ENCODE measurements at regions of chr2 and their contacts with region 1.

Region 1: DNA sequence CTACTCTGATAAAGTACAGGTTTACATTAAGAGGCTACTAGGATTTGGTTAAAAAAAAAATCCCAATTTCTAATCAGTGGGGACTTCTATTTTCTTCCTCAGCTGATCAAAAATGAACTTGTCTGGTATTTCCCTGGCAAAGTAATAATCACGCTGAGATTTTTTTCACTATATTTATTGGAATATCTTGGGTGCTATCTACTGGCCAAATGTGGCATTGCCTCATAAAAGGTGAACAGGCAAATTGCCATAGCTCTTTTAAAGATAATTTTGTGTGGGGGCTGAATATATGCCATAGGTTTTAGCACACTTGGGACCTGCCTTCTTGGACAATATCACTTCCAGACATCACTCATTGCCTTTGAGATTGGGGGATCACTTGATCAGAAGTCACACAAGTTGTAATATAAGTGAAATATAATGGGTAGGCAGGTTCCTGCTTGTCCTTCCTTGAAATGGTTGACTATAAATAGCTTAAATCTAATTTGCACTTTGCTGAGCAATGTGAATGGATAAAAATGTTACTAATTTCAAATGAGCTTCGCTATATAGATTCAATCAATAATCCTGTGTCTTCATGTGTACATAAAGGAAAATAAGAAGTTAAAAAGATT is 7.0 kb upstream of the NXPH2 start:
- DNase-seq: peak in 2 of 9 experiments; percentile 11 to 14
- ATAC-seq: no peak
- H3K4me3 ChIP-seq: no peak overlapping the region
- H3K4me3 Mint-ChIP-seq: no peak overlapping the region
- H3K27ac ChIP-seq: no peak overlapping the region
- H3K27ac Mint-ChIP-seq: no peak overlapping the region
- H3K4me1 ChIP-seq: no peaks in the 10 kb centered on the region
- H3K4me1 Mint-ChIP-seq: no peaks in the 10 kb centered on the region
- H3K27me3 ChIP-seq: no peaks in the 10 kb centered on the region
- H3K27me3 Mint-ChIP-seq: peaks cover 8% of the 10 kb centered on the region
- CTCF ChIP-seq: peak; percentile 48

Region 2: DNA sequence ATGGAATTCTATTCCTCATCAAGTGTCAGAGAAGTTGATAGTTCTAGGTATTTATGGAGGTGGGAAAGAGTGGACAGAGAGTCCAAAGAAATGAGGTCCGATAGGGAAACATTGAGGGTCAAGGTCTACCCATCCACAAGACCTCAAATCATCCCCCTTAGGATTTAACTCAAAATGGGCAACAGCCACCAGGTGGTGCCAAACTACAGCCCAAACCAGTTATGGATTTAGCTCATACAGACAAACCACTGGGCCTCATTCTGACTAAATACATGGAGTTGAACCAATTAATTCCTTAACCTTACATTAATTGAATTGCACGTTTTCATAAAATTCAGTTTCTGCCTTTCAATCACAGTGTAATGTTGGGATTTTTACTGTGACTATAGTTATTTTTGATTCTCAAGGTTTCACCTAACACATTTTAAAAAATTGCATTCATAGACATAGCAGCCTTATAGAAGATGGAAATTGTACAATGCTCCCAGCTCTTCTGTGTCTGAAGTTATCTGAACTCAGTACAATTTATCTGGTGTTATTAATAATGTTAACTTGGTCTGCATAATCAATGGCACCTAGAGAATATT is 921.1 kb before region 1 on chr2:
- CTCF ChIA-PET with region 1: interaction called, 5 read pairs
- POLR2A ChIA-PET with region 1: no interaction called
- intact Hi-C with region 1: loop called (anchors 2 kb)
- DNase-seq: peak in 8 of 9 experiments; percentile 7 to 52 (median 42)
- ATAC-seq: no peak
- H3K4me3 ChIP-seq: no peak overlapping the region
- H3K4me3 Mint-ChIP-seq: no peak overlapping the region
- H3K27ac ChIP-seq: no peak overlapping the region
- H3K27ac Mint-ChIP-seq: no peak overlapping the region
- H3K4me1 ChIP-seq: no peaks in the 10 kb centered on the region
- H3K4me1 Mint-ChIP-seq: no peaks in the 10 kb centered on the region
- H3K27me3 ChIP-seq: no peaks in the 10 kb centered on the region
- H3K27me3 Mint-ChIP-seq: no peaks in the 10 kb centered on the region
- CTCF ChIP-seq: peak; percentile 60

Region 3: GRCh38 chr2:137910641-137911040 is 876.5 kb before region 1 on chr2:
- CTCF ChIA-PET with region 1: no interaction called
- POLR2A ChIA-PET with region 1: no interaction called
- intact Hi-C with region 1: loop called (anchors 1 to 2 kb)
- DNase-seq: peak in 1 of 9 experiments; percentile 2
- ATAC-seq: no peak
- H3K4me3 ChIP-seq: no peak overlapping the region
- H3K4me3 Mint-ChIP-seq: no peak overlapping the region
- H3K27ac ChIP-seq: no peak overlapping the region
- H3K27ac Mint-ChIP-seq: no peak overlapping the region
- H3K4me1 ChIP-seq: no peaks in the 10 kb centered on the region
- H3K4me1 Mint-ChIP-seq: no peaks in the 10 kb centered on the region
- H3K27me3 ChIP-seq: no peaks in the 10 kb centered on the region
- H3K27me3 Mint-ChIP-seq: no peaks in the 10 kb centered on the region
- CTCF ChIP-seq: no peak

Region 4: GRCh38 chr2:137947728-137948336 is 839.3 kb before region 1 on chr2:
- CTCF ChIA-PET with region 1: interaction called, 4 read pairs
- POLR2A ChIA-PET with region 1: no interaction called
- intact Hi-C with region 1: loop called in 1 of 2 experiments (anchors 1 kb)
- DNase-seq: peak in 5 of 9 experiments; percentile 20 to 36 (median 21)
- ATAC-seq: no peak
- H3K4me3 ChIP-seq: no peak overlapping the region
- H3K4me3 Mint-ChIP-seq: no peak overlapping the region
- H3K27ac ChIP-seq: no peak overlapping the region
- H3K27ac Mint-ChIP-seq: no peak overlapping the region
- H3K4me1 ChIP-seq: no peaks in the 10 kb centered on the region
- H3K4me1 Mint-ChIP-seq: peaks cover 2% of the 10 kb centered on the region
- H3K27me3 ChIP-seq: no peaks in the 10 kb centered on the region
- H3K27me3 Mint-ChIP-seq: no peaks in the 10 kb centered on the region
- CTCF ChIP-seq: no peak

Measured in CD8-positive, alpha-beta T cell (primary cell).